ENCODE measurements at regions of chr19 and their contacts with region 1.

Region 1: DNA sequence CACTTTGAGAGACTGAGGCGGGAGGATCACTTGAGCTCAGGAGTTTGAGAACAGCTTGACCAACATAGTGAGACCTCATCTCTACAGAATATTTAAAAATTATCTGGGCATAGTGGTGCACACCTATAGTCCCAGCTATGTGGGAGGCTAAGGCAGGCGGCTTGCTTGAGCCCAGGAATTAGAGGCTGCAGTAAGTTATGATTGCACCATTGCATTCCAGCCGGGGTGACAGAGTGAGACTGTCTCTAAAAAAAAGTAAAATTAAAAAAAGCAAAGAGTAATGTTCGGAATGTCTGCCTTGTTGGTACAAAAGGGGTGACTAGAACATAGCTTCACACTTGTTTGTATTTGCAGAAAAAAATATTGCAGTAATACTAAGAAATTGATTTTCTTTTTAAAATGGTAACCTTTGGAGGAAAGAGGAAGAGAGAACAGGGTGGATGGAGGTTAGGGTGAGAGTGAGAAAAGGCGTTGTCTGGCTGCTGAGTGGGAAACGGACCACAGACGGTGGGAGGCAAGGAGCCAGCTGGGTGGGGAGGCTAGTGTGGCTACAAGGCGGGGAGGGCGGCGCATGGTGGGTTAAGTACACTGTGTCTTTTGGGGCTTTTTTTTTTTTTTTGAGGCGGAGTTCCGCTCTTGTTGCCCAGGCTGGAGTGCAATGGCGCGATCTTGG is 10.2 kb downstream of the PPP1R14A start:
- DNase-seq: no peak
- H3K4me3 ChIP-seq: no peak overlapping the region
- H3K27ac ChIP-seq: no peak overlapping the region
- H3K4me1 ChIP-seq: peaks cover 0 to 6% (median 2%) of the 10 kb centered on the region in 4 experiments
- H3K27me3 ChIP-seq: no peaks in the 10 kb centered on the region

Region 2: GRCh38 chr19:38209671-38210457 is 36.1 kb before region 1 on chr19:
- CTCF ChIA-PET with region 1: no interaction called
- POLR2A ChIA-PET with region 1: no interaction called
- DNase-seq: no peak
- H3K4me3 ChIP-seq: peak overlapping the region in 3 of 7 experiments; percentile 24 to 50 (median 43)
- H3K27ac ChIP-seq: no peak overlapping the region
- H3K4me1 ChIP-seq: peaks cover 0 to 53% (median 36%) of the 10 kb centered on the region in 4 experiments
- H3K27me3 ChIP-seq: peaks cover 0 to 50% (median 13%) of the 10 kb centered on the region in 5 experiments

Region 3: DNA sequence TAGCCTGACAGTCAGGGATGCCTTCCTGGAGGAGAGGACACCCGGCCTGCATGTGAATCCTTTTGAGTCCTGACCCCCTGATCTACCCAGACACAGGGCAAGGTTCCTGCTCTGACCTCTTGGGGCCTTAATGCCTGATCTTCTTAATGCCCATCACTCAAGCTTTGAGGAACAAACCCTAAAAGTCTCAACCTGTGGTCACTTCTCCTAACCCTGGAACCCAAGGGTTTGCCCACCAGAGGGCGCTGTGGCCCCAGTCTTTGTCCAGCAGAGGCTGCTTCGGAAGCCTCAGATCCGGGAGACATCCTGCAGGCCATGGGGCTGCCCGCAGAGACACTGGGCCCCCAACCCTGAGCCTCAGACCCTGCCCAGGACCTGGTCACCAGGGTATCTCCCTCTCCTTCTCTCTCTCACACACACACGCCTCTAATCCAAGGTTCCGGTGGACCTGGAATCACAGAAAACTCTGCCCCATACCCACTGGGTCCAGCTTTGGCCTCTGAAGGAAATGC is 12.2 kb before region 1 on chr19:
- CTCF ChIA-PET with region 1: interaction called, 26 read pairs
- POLR2A ChIA-PET with region 1: interaction called, 5 read pairs
- DNase-seq: peak; percentile 72 to 85 (median 78)
- H3K4me3 ChIP-seq: no peak overlapping the region
- H3K27ac ChIP-seq: no peak overlapping the region
- H3K4me1 ChIP-seq: peaks cover 0 to 8% (median 7%) of the 10 kb centered on the region in 4 experiments
- H3K27me3 ChIP-seq: peaks cover 0 to 29% (median 17%) of the 10 kb centered on the region in 5 experiments